BJ (cell line): ENCODE measurements at regions of chr9 and their contacts with region 1.

Region 1: DNA sequence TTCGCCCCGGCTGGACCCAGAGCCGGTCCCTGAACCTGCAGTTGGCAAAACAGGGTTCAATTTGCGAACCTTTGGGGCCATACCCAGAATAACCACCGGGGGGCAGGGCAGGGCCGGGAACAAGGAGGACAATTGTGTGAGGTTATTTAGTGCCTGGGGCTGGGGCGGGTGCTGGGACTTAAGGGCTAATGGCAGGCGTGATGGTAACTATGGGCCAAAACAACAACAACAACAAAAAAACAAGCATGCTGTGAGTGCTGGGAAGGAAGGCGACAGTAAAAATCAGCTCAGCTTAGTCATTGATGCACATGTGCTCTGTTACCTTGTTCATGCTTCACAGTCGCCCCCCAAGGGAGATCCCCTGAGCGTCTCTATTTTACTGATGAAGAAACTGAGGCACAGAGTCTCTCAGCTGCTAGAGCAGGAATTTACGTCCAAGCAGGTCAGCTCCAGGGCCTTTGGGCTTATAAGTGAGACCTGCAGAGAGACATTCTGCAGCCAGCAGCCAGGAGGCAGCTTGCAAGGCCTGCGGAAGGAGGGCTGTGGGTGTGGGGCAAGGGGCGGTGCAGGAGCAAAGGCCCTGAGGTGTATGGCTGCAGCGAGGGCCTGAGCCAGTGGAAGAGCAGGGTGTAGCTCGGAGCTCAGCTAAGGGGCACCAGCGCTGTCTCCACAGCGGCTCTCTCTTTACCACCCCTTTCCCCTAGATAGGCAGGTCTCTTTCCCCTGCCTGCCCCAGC is 106.0 kb downstream of the PHF2 start:
- DNase-seq: peak; percentile 4
- H3K4me3 ChIP-seq: no peak overlapping the region
- H3K27me3 ChIP-seq: no peaks in the 10 kb centered on the region
- CTCF ChIP-seq: peak; percentile 89

Region 2: GRCh38 chr9:93431583-93431991 is 250.8 kb before region 1 on chr9:
- CTCF ChIA-PET with region 1: no interaction called
- POLR2A ChIA-PET with region 1: no interaction called
- DNase-seq: no peak
- H3K4me3 ChIP-seq: no peak overlapping the region
- H3K27me3 ChIP-seq: no peaks in the 10 kb centered on the region; the same call in 1 of the 2 replicates
- CTCF ChIP-seq: no peak

Region 3: GRCh38 chr9:93525476-93525875 is 156.9 kb before region 1 on chr9:
- CTCF ChIA-PET with region 1: no interaction called
- POLR2A ChIA-PET with region 1: no interaction called
- DNase-seq: no peak
- H3K4me3 ChIP-seq: no peak overlapping the region
- H3K27me3 ChIP-seq: no peaks in the 10 kb centered on the region
- CTCF ChIP-seq: no peak

Region 4: GRCh38 chr9:93962561-93963440 is 280.4 kb after region 1 on chr9:
- CTCF ChIA-PET with region 1: interaction called, 60 read pairs
- POLR2A ChIA-PET with region 1: no interaction called
- DNase-seq: peak; percentile 17
- H3K4me3 ChIP-seq: no peak overlapping the region
- H3K27me3 ChIP-seq: peaks cover 31% of the 10 kb centered on the region
- CTCF ChIP-seq: peak; percentile 85

Region 5: DNA sequence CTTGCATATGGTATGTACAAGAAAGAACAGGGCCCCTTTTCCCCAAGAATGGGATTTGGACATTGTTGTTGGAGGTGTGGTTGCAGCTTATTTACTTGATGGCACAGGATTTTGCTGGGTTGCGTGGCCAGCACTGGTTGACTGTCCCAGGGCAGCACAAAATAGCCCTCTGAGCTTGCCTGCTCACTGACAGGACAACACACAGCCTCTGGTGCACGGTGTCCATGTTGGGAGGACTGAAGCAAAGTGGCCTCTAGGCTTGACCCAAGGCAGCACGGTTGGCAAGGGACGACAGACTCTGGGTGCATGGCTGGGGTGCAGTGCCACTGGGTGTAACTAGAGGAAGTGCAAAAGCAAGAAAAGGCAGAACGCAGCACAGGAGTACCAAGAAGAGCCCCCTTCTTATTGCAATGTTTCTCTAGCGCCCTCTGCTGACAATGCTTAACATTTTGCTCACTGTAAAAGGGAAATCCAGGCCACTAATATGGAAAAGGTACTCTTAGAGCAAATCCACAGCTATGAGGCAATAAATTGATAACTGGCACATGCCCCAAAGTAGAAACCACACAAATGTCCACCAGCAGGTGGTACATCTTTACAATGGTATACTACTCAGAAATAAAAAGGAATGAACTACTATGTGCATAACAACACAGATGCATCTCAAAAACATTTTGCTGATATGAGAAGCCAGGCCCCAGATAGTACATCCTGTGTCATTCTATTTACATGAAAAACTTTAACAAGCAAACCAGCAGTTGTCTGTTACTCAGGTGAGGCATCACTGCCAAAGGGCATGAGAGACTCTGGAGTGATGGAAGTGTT is 320.1 kb after region 1 on chr9:
- CTCF ChIA-PET with region 1: interaction called, 24 read pairs
- POLR2A ChIA-PET with region 1: no interaction called
- DNase-seq: no peak
- H3K4me3 ChIP-seq: no peak overlapping the region
- H3K27me3 ChIP-seq: no peaks in the 10 kb centered on the region; the same call in 1 of the 2 replicates
- CTCF ChIP-seq: peak; percentile 59